GM12878 (cell line): ENCODE measurements at regions of chr19 and their contacts with region 1.

Region 1: GRCh38 chr19:45092747-45093678 is at the start of gene PPP1R37:
- DNase-seq: peak; percentile 77
- ATAC-seq: peak; percentile 86
- H3K4me3 ChIP-seq: peak within 1 kb of the TSS; percentile 93
- H3K27ac ChIP-seq: peak within 1 kb of the TSS; percentile 98
- H3K4me1 ChIP-seq: peaks cover 9% of the 10 kb centered on the region
- H3K27me3 ChIP-seq: no peaks in the 10 kb centered on the region
- CTCF ChIP-seq: peak; percentile 7 to 24 (median 13); a peak in 2 of 6 replicates
- EP300 ChIP-seq: peak in 1 of 2 experiments; percentile 100; a peak in 2 of 4 replicates
- POLR2A ChIP-seq: peak; percentile 80
- RAD21 ChIP-seq: no peak
- polyA plus RNA-seq, gene PPP1R37: 0.09 TPM in 1 of 2 experiments, not detected in the other

Region 2: GRCh38 chr19:45038931-45039893 is 53.8 kb before region 1 on chr19 and contains the start of gene CLASRP:
- CTCF ChIA-PET with region 1: interaction called, 4 read pairs
- POLR2A ChIA-PET with region 1: interaction called, 5 read pairs
- RAD21 ChIA-PET with region 1: no interaction called
- SMC1A ChIA-PET with region 1: interaction called, 10 read pairs
- in situ Hi-C with region 1: no loop called
- intact Hi-C with region 1: no loop called
- DNase-seq: peak; percentile 44
- ATAC-seq: peak; percentile 97
- H3K4me3 ChIP-seq: peak within 1 kb of the TSS; percentile 76
- H3K27ac ChIP-seq: peak within 1 kb of the TSS; percentile 94
- H3K4me1 ChIP-seq: peaks cover 10% of the 10 kb centered on the region
- H3K27me3 ChIP-seq: no peaks in the 10 kb centered on the region
- CTCF ChIP-seq: no peak
- EP300 ChIP-seq: no peak
- POLR2A ChIP-seq: peak; percentile 99
- RAD21 ChIP-seq: no peak
- polyA plus RNA-seq, gene CLASRP: 0.68 to 2.3 TPM

Region 3: GRCh38 chr19:45103156-45103507 is 10.1 kb after region 1 on chr19:
- CTCF ChIA-PET with region 1: interaction called, 12 read pairs
- POLR2A ChIA-PET with region 1: interaction called, 8 read pairs
- RAD21 ChIA-PET with region 1: interaction called, 8 read pairs
- SMC1A ChIA-PET with region 1: interaction called, 7 read pairs
- in situ Hi-C with region 1: no loop called
- intact Hi-C with region 1: no loop called
- DNase-seq: no peak
- ATAC-seq: peak; percentile 81
- H3K4me3 ChIP-seq: no peak overlapping the region
- H3K27ac ChIP-seq: no peak overlapping the region
- H3K4me1 ChIP-seq: peaks cover 23% of the 10 kb centered on the region
- H3K27me3 ChIP-seq: no peaks in the 10 kb centered on the region
- CTCF ChIP-seq: peak in 1 of 3 experiments; percentile 33; a peak in 2 of 6 replicates
- EP300 ChIP-seq: no peak
- POLR2A ChIP-seq: no peak
- RAD21 ChIP-seq: no peak

Region 4: DNA sequence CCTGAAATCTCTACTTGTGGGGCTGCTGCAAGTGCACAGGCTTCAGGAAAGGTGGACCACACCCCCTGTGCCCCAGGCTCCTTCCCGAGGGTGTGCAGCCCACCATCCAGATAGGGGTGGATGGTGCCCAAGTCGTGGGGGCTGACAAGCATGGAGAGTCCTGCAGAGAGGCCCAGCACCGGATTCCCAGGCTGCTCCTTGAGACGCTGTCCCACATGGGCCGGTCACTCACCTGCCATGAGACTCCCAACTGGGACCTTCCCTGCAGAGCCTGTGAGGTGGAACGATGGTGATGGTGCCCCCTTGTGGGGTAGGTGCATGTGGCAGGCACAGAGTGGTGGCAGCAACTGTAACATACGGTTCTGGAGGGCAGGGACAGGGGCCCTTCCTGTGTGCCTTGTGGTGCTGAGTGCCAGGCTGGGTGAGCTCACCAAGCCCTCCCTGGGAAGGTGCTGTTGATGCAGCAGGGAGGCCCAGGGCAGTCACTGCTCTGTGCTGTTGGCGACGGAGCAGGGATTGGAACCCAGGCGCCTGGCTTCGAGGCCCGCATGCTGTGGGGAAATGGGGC is 33.0 kb after region 1 on chr19:
- CTCF ChIA-PET with region 1: interaction called, 14 read pairs
- POLR2A ChIA-PET with region 1: interaction called, 5 read pairs
- RAD21 ChIA-PET with region 1: interaction called, 6 read pairs
- SMC1A ChIA-PET with region 1: interaction called, 7 read pairs
- in situ Hi-C with region 1: no loop called
- intact Hi-C with region 1: loop called (anchors 2 kb)
- DNase-seq: no peak
- ATAC-seq: peak; percentile 95
- H3K4me3 ChIP-seq: no peak overlapping the region
- H3K27ac ChIP-seq: no peak overlapping the region
- H3K4me1 ChIP-seq: peaks cover 21% of the 10 kb centered on the region
- H3K27me3 ChIP-seq: no peaks in the 10 kb centered on the region
- CTCF ChIP-seq: peak; percentile 79 to 93 (median 83)
- EP300 ChIP-seq: no peak
- POLR2A ChIP-seq: peak; percentile 28; the same call in 1 of the 2 replicates
- RAD21 ChIP-seq: peak; percentile 76

Region 5: GRCh38 chr19:45164577-45165335 is 71.7 kb after region 1 on chr19:
- CTCF ChIA-PET with region 1: interaction called, 4 read pairs
- POLR2A ChIA-PET with region 1: no interaction called
- RAD21 ChIA-PET with region 1: interaction called, 12 read pairs
- SMC1A ChIA-PET with region 1: interaction called, 3 read pairs
- in situ Hi-C with region 1: no loop called
- intact Hi-C with region 1: no loop called
- DNase-seq: peak; percentile 64
- ATAC-seq: peak; percentile 92
- H3K4me3 ChIP-seq: no peak overlapping the region
- H3K27ac ChIP-seq: peak overlapping the region; percentile 64; the same call in 1 of the 2 replicates
- H3K4me1 ChIP-seq: peaks cover 18% of the 10 kb centered on the region
- H3K27me3 ChIP-seq: no peaks in the 10 kb centered on the region; a peak in 1 of 4 replicates
- CTCF ChIP-seq: peak; percentile 8 to 33 (median 32); a peak in 3 of 6 replicates
- EP300 ChIP-seq: no peak
- POLR2A ChIP-seq: no peak
- RAD21 ChIP-seq: no peak

Region 6: GRCh38 chr19:45243144-45243732 is 150.2 kb after region 1 on chr19:
- CTCF ChIA-PET with region 1: no interaction called
- POLR2A ChIA-PET with region 1: no interaction called
- RAD21 ChIA-PET with region 1: no interaction called
- SMC1A ChIA-PET with region 1: no interaction called
- in situ Hi-C with region 1: no loop called
- intact Hi-C with region 1: no loop called
- DNase-seq: no peak
- ATAC-seq: no peak
- H3K4me3 ChIP-seq: no peak overlapping the region
- H3K27ac ChIP-seq: no peak overlapping the region
- H3K4me1 ChIP-seq: no peaks in the 10 kb centered on the region
- H3K27me3 ChIP-seq: no peaks in the 10 kb centered on the region
- CTCF ChIP-seq: no peak
- EP300 ChIP-seq: no peak
- POLR2A ChIP-seq: no peak
- RAD21 ChIP-seq: no peak

Region 7: DNA sequence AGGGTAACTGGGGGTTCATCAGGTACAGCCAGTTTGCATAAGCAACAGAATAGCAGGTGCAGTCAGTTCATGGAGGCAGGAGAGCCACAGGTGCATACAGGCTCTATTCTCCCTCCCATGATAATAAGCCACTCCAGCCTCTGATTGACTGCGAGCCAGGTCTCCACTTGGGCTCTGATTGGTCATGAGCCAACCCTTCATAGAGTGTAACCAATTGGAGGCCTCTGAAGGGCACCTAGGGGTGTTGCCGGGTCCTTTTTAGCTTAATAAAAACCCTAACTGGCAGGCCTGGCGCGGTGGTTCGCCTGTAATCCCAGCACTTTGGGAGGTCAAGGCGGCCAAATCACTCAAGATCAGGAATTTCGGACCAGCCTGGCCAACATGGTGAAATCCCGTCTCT is 238.4 kb after region 1 on chr19:
- CTCF ChIA-PET with region 1: interaction called, 3 read pairs
- POLR2A ChIA-PET with region 1: no interaction called
- RAD21 ChIA-PET with region 1: no interaction called
- SMC1A ChIA-PET with region 1: interaction called, 3 read pairs
- in situ Hi-C with region 1: no loop called
- intact Hi-C with region 1: loop called (anchors 10 kb)
- DNase-seq: no peak
- ATAC-seq: peak; percentile 34
- H3K4me3 ChIP-seq: no peak overlapping the region
- H3K27ac ChIP-seq: no peak overlapping the region
- H3K4me1 ChIP-seq: no peaks in the 10 kb centered on the region
- H3K27me3 ChIP-seq: no peaks in the 10 kb centered on the region
- CTCF ChIP-seq: no peak
- EP300 ChIP-seq: no peak
- POLR2A ChIP-seq: no peak
- RAD21 ChIP-seq: no peak